GM12878 (cell line): ENCODE measurements at regions of chr18 and their contacts with region 1.

Region 1: DNA sequence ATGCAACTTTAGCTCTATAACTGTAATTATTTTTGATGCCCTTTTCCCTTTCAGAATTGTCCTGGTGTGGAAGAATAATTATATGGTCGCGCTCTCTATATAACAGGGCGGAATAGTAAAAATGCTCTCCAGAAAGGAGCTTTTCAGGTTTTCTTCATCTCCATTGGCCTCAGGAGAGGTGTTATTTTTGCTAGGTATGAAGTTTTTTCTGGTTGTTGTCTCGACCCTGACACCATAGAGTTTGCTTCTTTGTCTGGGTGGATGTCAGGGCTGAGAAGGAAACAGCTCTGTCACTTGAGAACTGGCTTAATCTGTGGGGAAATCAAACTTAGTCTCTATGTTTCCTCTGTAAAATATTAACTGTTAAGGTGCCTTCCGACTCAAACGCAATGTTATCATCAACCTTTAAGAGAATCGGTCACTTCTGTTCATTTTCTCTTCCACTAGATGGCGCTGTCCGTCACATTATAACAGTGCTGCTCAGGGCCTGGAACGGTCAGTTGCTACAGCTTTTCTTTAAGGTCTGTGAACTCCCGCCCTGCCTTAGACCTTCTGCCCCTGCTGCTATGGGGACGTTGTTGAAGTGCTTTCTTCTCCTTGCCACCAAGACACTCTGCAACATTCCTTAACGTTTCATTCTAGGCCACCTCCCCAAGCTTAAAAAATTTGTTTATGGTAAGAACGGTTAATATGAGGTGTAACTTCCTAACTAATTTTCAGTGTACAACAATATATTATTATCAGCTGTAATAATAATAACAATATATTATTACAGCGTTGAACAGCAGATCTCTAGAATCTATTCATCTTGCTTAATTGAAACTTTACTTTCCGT is 23.8 kb upstream of the SERPINB12 start:
- DNase-seq: peak; percentile 16
- ATAC-seq: peak; percentile 98
- H3K4me3 ChIP-seq: no peak overlapping the region
- H3K27ac ChIP-seq: no peak overlapping the region
- H3K4me1 ChIP-seq: no peaks in the 10 kb centered on the region
- H3K27me3 ChIP-seq: no peaks in the 10 kb centered on the region; a peak in 1 of 4 replicates
- CTCF ChIP-seq: peak; percentile 58 to 65 (median 63)
- EP300 ChIP-seq: no peak
- POLR2A ChIP-seq: no peak
- RAD21 ChIP-seq: peak; percentile 93

Region 2: DNA sequence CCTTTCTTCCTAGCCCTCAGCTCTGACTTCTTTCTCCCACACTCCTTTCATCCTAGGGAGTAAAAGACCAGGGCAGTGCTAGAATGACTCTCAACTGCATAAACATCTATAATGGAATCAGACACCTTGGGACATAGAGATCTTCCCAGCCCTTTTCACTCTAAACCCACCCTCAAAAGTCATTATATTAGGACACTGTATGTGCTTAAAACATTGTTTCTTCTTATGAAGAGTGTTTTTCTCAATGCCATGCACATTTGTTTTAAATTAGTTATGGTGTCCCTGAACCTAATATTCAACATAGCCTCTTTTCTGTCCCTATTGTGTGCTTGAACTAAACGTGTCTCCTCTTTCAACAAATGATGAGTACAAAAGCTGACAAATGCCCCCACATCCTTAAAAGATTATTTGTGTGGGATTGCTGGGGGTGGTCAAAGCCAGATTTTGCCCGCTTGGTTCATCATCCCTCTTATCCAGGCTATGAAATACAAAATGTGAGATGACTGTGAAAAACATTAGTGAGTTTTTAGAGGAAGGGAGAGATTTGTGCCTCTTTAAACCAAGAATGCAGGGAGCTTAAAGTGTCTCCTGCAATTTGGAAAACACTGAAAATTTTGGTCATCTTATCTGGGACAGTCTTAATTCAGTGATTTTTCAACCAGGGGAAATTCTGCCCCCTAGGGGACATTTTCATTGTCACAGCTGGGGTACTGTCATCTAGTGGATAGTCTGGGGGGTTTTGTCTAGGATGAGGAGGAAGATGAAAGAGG is 12.6 kb before region 1 on chr18:
- CTCF ChIA-PET with region 1: interaction called, 72 read pairs
- POLR2A ChIA-PET with region 1: no interaction called
- RAD21 ChIA-PET with region 1: interaction called, 5 read pairs
- SMC1A ChIA-PET with region 1: interaction called, 18 read pairs
- in situ Hi-C with region 1: no loop called
- intact Hi-C with region 1: no loop called
- DNase-seq: no peak
- ATAC-seq: peak; percentile 85
- H3K4me3 ChIP-seq: no peak overlapping the region
- H3K27ac ChIP-seq: no peak overlapping the region
- H3K4me1 ChIP-seq: no peaks in the 10 kb centered on the region
- H3K27me3 ChIP-seq: no peaks in the 10 kb centered on the region
- CTCF ChIP-seq: peak; percentile 41 to 67 (median 66)
- EP300 ChIP-seq: no peak
- POLR2A ChIP-seq: no peak
- RAD21 ChIP-seq: peak; percentile 61

Region 3: DNA sequence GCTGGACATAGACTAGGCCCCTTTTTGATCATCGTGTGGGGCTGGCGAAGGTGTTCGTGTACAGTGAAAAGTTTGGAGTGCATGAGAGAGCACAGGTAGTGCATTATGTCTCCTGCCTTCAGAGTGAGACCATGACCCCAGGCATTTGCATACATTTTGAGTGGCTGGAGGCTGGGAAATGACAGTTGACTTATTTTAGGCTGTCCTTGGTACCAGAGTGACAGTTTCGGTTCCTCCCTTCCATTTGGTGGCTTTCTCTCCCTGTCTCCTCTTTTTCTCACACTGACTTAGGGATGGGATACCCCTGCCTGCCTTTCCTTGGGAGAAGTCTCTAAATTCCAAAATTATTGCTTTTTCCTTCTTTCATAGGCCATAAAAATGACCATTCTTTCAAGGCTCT is 43.9 kb after region 1 on chr18:
- CTCF ChIA-PET with region 1: interaction called, 26 read pairs
- POLR2A ChIA-PET with region 1: no interaction called
- RAD21 ChIA-PET with region 1: interaction called, 6 read pairs
- SMC1A ChIA-PET with region 1: interaction called, 7 read pairs
- in situ Hi-C with region 1: no loop called
- intact Hi-C with region 1: no loop called
- DNase-seq: peak; percentile 17
- ATAC-seq: peak; percentile 71
- H3K4me3 ChIP-seq: no peak overlapping the region
- H3K27ac ChIP-seq: no peak overlapping the region
- H3K4me1 ChIP-seq: peaks cover 10% of the 10 kb centered on the region
- H3K27me3 ChIP-seq: no peaks in the 10 kb centered on the region
- CTCF ChIP-seq: no peak
- EP300 ChIP-seq: no peak; a peak in 1 of 4 replicates
- POLR2A ChIP-seq: no peak
- RAD21 ChIP-seq: no peak

Region 4: GRCh38 chr18:63578357-63578958 is 60.1 kb after region 1 on chr18:
- CTCF ChIA-PET with region 1: interaction called, 237 read pairs
- POLR2A ChIA-PET with region 1: no interaction called
- RAD21 ChIA-PET with region 1: interaction called, 149 read pairs
- SMC1A ChIA-PET with region 1: interaction called, 130 read pairs
- in situ Hi-C with region 1: loop called (anchors 5 kb)
- intact Hi-C with region 1: loop called (anchors 1 kb)
- DNase-seq: no peak
- ATAC-seq: peak; percentile 77
- H3K4me3 ChIP-seq: no peak overlapping the region
- H3K27ac ChIP-seq: no peak overlapping the region
- H3K4me1 ChIP-seq: no peaks in the 10 kb centered on the region
- H3K27me3 ChIP-seq: no peaks in the 10 kb centered on the region
- CTCF ChIP-seq: peak; percentile 64 to 76 (median 74)
- EP300 ChIP-seq: no peak
- POLR2A ChIP-seq: no peak
- RAD21 ChIP-seq: peak; percentile 90

Region 5: GRCh38 chr18:63848159-63848558 is 329.8 kb after region 1 on chr18:
- CTCF ChIA-PET with region 1: interaction called, 84 read pairs
- POLR2A ChIA-PET with region 1: no interaction called
- RAD21 ChIA-PET with region 1: interaction called, 16 read pairs
- SMC1A ChIA-PET with region 1: interaction called, 17 read pairs
- in situ Hi-C with region 1: loop called (anchors 5 kb)
- intact Hi-C with region 1: loop called (anchors 1 kb)
- DNase-seq: no peak
- ATAC-seq: peak; percentile 71
- H3K4me3 ChIP-seq: no peak overlapping the region
- H3K27ac ChIP-seq: no peak overlapping the region
- H3K4me1 ChIP-seq: no peaks in the 10 kb centered on the region
- H3K27me3 ChIP-seq: peaks cover 0 to 4% of the 10 kb centered on the region in 2 experiments; a peak in 2 of 4 replicates
- CTCF ChIP-seq: peak; percentile 54 to 64 (median 57); a peak in 5 of 6 replicates
- EP300 ChIP-seq: no peak
- POLR2A ChIP-seq: no peak
- RAD21 ChIP-seq: peak; percentile 73